Pancreas (tissue), 10 donors: ENCODE measurements at regions of chr1 and their contacts with region 1.

Region 1: DNA sequence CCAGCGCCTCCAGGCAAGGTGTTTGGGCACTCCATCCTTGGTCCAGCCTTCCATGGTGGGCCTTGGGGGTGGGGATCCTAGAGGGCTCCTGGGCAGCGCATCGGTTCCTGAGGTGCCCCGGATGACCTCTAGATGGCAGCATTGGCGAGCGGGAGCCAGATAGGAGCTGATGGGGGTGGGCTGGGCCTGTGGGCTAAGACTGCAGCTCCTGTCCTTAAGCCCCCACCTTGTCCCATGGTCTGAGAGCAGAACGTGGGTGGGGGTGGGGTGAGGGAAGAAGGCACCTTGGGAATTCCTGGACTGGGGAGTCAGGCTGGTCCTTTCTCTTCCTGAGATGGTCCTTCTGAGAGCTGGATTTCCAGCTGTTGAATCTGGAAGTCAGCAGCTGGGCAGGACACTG is 93.4 kb upstream of the CSF3R start:
- DNase-seq: peak in 5 of 6 donors; percentile 10 to 82 (median 47)
- ATAC-seq: peak; percentile 43 to 85 (median 80)
- H3K4me3 ChIP-seq: no peak overlapping the region
- H3K27ac ChIP-seq: no peak overlapping the region
- H3K4me1 ChIP-seq: no peaks in the 10 kb centered on the region
- H3K27me3 ChIP-seq: no peaks in the 10 kb centered on the region
- CTCF ChIP-seq: peak; percentile 59 to 74 (median 68)

Region 2: GRCh38 chr1:36199934-36200741 is 376.0 kb before region 1 on chr1:
- intact Hi-C with region 1: no loop called
- DNase-seq: peak in 3 of 6 donors; percentile 33 to 59 (median 48)
- ATAC-seq: peak; percentile 66 to 78 (median 73)
- H3K4me3 ChIP-seq: no peak overlapping the region
- H3K27ac ChIP-seq: peak overlapping the region; percentile 40 to 79 (median 73)
- H3K4me1 ChIP-seq: peaks cover 0 to 23% (median 12%) of the 10 kb centered on the region in 3 donors
- H3K27me3 ChIP-seq: no peaks in the 10 kb centered on the region
- CTCF ChIP-seq: no peak

Region 3: DNA sequence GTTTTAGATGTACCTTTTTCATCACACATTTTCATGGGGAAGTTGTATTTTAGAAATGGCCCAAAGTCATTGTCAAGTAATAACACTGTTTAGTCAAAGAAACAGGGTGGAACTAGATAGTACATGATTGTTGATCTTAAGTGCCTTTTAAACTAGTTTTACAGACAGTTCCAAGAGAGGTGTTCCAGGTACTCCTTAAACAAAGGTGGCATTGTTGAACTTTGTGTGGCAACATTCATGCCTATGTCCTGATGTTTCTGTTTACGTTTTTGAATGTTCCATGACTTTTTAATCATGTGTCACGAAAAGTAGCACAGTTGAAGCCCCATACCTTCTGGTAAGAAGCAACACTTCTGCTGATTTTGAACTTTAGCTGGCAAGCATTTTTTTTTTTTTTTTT is 279.1 kb before region 1 on chr1:
- intact Hi-C with region 1: no loop called
- DNase-seq: no peak
- ATAC-seq: peak in 1 of 4 donors; percentile 42
- H3K4me3 ChIP-seq: no peak overlapping the region
- H3K27ac ChIP-seq: peak overlapping the region in 2 of 4 donors; percentile 30 to 74
- H3K4me1 ChIP-seq: peaks cover 0 to 4% (median 0%) of the 10 kb centered on the region in 3 donors
- H3K27me3 ChIP-seq: no peaks in the 10 kb centered on the region
- CTCF ChIP-seq: no peak

Region 4: GRCh38 chr1:36516372-36517325 is 59.5 kb before region 1 on chr1:
- intact Hi-C with region 1: no loop called
- DNase-seq: peak in 2 of 6 donors; percentile 24 to 26
- ATAC-seq: peak in 3 of 4 donors; percentile 77 to 81 (median 79)
- H3K4me3 ChIP-seq: no peak overlapping the region
- H3K27ac ChIP-seq: no peak overlapping the region
- H3K4me1 ChIP-seq: no peaks in the 10 kb centered on the region
- H3K27me3 ChIP-seq: no peaks in the 10 kb centered on the region
- CTCF ChIP-seq: peak; percentile 53 to 78 (median 64)

Region 5: GRCh38 chr1:36691374-36691773 is 115.3 kb after region 1 on chr1:
- intact Hi-C with region 1: no loop called
- DNase-seq: no peak
- ATAC-seq: no peak
- H3K4me3 ChIP-seq: no peak overlapping the region
- H3K27ac ChIP-seq: no peak overlapping the region
- H3K4me1 ChIP-seq: no peaks in the 10 kb centered on the region
- H3K27me3 ChIP-seq: no peaks in the 10 kb centered on the region
- CTCF ChIP-seq: no peak

Region 6: GRCh38 chr1:37434292-37434907 is 858.3 kb after region 1 on chr1:
- intact Hi-C with region 1: loop called in 1 of 3 experiments (anchors 10 kb)
- DNase-seq: peak; percentile 42 to 94 (median 74)
- ATAC-seq: peak; percentile 79 to 94 (median 92)
- H3K4me3 ChIP-seq: no peak overlapping the region
- H3K27ac ChIP-seq: no peak overlapping the region
- H3K4me1 ChIP-seq: no peaks in the 10 kb centered on the region
- H3K27me3 ChIP-seq: no peaks in the 10 kb centered on the region
- CTCF ChIP-seq: peak; percentile 85 to 91 (median 88)